Mammary epithelial cell (primary cell): ENCODE measurements at regions of chr4 and their contacts with region 1.

Region 1: GRCh38 chr4:72567821-72568675 is 973 bp downstream of the ADAMTS3 start:
- DNase-seq: peak; percentile 82
- H3K4me3 ChIP-seq: peak overlapping the region; percentile 55 to 73 (median 60)
- H3K27ac ChIP-seq: no peak overlapping the region
- H3K4me1 ChIP-seq: peaks cover 17% of the 10 kb centered on the region
- H3K27me3 ChIP-seq: peaks cover 1% of the 10 kb centered on the region
- CTCF ChIP-seq: peak; percentile 44 to 50

Region 2: DNA sequence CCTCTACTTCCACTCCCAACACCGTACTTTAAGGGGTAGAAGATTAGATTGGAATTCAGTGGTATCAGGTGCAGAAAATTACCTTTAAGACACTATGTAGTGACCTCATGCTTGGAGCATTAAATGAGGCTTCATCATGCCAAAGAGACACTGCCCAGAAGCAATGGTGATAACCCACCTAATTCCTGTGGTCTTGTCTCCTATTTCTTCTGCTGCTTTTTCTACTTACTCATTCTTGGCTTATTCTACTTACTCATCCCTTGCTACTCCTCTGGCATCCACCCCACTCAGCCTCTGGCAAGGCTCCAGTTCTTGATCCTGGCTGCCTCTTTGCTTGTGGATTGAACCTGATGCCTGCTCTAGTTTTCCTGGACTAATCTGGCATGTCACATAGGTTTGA is 63.2 kb after region 1 on chr4:
- CTCF ChIA-PET with region 1: no interaction called
- dilution Hi-C with region 1: no loop called
- in situ Hi-C with region 1: no loop called
- intact Hi-C with region 1: loop called (anchors 2 kb)
- DNase-seq: peak; percentile 93
- H3K4me3 ChIP-seq: no peak overlapping the region
- H3K27ac ChIP-seq: no peak overlapping the region
- H3K4me1 ChIP-seq: peaks cover 6% of the 10 kb centered on the region
- H3K27me3 ChIP-seq: peaks cover 16% of the 10 kb centered on the region
- CTCF ChIP-seq: no peak